ENCODE measurements at regions of chrX and their contacts with region 1.

Region 1: GRCh38 chrX:53330331-53330730 is 48.9 kb upstream of the IQSEC2 start:
- DNase-seq: no peak
- ATAC-seq: no peak
- H3K4me3 ChIP-seq: no peak overlapping the region
- H3K27ac ChIP-seq: no peak overlapping the region
- H3K4me1 ChIP-seq: no peaks in the 10 kb centered on the region
- H3K27me3 ChIP-seq: 0 out of 2 replicates have a peak, but pooled peaks cover 3% of the 10 kb centered on the region
- CTCF ChIP-seq: no peak

Region 2: GRCh38 chrX:53244610-53245009 is 85.7 kb before region 1 on chrX:
- CTCF ChIA-PET with region 1: interaction called, 3 read pairs
- POLR2A ChIA-PET with region 1: no interaction called
- intact Hi-C with region 1: loop called (anchors 1 kb)
- DNase-seq: peak; percentile 22
- ATAC-seq: no peak
- H3K4me3 ChIP-seq: no peak overlapping the region
- H3K27ac ChIP-seq: no peak overlapping the region
- H3K4me1 ChIP-seq: no peaks in the 10 kb centered on the region; the same call in 1 of the 2 replicates
- H3K27me3 ChIP-seq: no peaks in the 10 kb centered on the region
- CTCF ChIP-seq: peak; percentile 62

Region 3: GRCh38 chrX:53340852-53341607 is 10.7 kb after region 1 on chrX:
- CTCF ChIA-PET with region 1: no interaction called
- POLR2A ChIA-PET with region 1: no interaction called
- intact Hi-C with region 1: no loop called
- DNase-seq: no peak
- ATAC-seq: no peak
- H3K4me3 ChIP-seq: no peak overlapping the region
- H3K27ac ChIP-seq: no peak overlapping the region
- H3K4me1 ChIP-seq: no peaks in the 10 kb centered on the region
- H3K27me3 ChIP-seq: no peaks in the 10 kb centered on the region
- CTCF ChIP-seq: no peak

Measured in PC-3 (cell line).